Lower leg skin (tissue), 4 donors: ENCODE measurements at regions of chr20 and their contacts with region 1.

Region 1: DNA sequence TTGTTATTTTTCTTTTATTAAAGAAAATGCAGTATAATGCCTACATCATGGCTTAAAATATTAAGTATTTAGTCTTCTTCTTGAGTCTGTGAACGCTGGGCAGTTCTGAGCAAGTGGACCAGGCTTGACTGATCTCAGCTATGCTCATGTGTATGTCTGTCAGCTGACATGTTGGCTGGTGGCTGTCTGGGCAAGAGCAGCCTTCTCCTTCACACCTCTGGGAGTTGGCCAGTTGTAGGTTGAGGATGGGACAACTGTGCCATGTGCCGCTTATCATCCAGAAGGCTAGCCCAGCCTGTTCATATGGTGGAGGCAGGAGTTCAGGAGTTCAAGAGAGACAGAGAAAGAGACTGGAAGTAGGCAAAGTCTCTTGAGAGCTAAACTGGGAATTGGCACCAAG is 175.9 kb downstream of the PLCB4 start:
- DNase-seq: no peak
- H3K4me3 ChIP-seq: no peak overlapping the region
- CTCF ChIP-seq: no peak
- POLR2A ChIP-seq: no peak

Region 2: DNA sequence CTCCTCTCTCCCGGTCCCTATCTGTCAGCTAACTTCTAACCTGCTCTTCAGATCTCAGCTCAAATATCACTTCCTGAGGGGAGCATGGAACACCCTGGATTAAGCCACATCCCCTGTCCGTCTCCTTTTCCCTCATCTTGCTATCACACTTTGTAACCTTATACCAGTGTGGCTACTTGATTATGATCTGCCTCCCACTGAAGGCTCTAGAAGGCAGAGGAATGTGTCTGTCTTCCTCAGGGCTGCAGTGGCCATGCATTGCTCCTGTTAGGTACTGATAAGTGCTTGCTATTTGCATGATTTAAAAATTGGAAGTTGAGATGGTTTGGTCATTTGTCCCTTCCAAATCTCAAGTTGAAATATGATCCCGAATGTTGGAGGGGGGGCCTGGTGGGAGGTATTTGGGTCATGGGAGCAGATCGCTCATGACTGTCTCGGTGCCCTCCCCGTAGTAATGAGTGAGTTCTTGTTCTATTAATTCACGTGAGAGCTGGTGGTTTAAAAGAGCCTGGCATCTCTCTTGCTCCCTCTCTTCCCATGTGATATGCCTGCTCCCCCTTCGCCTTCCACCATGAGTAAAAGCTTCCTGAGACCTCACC is 104.5 kb before region 1 on chr20:
- intact Hi-C with region 1: loop called (anchors 5 kb)
- DNase-seq: no peak
- H3K4me3 ChIP-seq: no peak overlapping the region
- CTCF ChIP-seq: no peak
- POLR2A ChIP-seq: no peak

Region 3: DNA sequence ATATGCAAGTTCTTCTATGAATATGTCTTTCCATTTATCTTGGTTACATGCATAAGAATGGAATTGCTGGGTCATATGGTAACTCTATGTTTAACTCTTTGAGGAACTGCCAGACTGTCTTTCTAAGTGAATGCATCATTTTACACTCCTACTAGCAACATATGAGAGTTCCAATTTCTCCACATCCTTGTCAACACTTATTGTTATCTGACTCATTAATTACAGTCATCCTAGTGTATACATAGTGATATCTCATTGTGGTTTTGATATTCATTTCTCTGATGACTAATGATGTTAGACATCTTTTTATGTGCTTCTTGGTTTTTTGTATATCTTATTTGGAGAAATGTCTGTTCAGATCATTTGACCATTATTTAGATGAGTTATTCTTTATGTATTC is 172.9 kb after region 1 on chr20:
- intact Hi-C with region 1: no loop called
- DNase-seq: no peak
- H3K4me3 ChIP-seq: no peak overlapping the region
- CTCF ChIP-seq: no peak
- POLR2A ChIP-seq: no peak